ENCODE measurements at regions of chr1 and their contacts with region 1.

Region 1: DNA sequence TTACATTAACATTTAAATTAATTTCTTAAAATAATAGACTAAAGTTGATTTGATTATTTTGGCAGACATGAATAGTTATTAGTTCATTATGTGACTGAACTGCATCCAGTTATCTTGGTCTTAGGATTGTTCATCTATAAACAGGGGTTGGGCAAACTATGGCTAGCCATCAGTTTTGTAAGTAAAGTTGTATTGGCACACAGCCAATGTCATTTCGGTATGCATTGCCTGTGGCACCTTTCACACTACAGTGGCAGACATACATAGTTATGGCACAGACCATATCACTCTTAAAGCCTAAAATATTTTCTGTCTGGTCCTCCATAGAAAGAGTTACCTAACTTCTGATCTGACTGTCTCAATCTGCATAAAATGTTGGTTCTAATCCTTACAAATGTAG is 27.2 kb downstream of the ADGRL2 start:
- DNase-seq: no peak
- ATAC-seq: no peak

Region 2: GRCh38 chr1:81937791-81938450 is 110.0 kb after region 1 on chr1:
- intact Hi-C with region 1: loop called (anchors 10 kb)
- DNase-seq: no peak
- ATAC-seq: peak; percentile 77

Measured in left ventricle myocardium superior (tissue), 1 donor.